Activated CD4-positive, alpha-beta T cell treated with anti-CD3 and anti-CD28 coated beads, Interleukin-2, amount 10 ng/mL, durations not matched to agents 24 days and 14 days (primary cell): ENCODE measurements at regions of chr1 and their contacts with region 1.

Region 1: GRCh38 chr1:65812065-65812464 is 19.4 kb downstream of the PDE4B start:
- DNase-seq: peak; percentile 91
- H3K4me3 Mint-ChIP-seq: peak overlapping the region; percentile 4
- H3K27ac Mint-ChIP-seq: peak overlapping the region; percentile 76
- H3K4me1 Mint-ChIP-seq: peaks cover 21% of the 10 kb centered on the region
- H3K27me3 Mint-ChIP-seq: peaks cover 15% of the 10 kb centered on the region

Region 2: GRCh38 chr1:64877151-64877550 is 934.9 kb before region 1 on chr1:
- intact Hi-C with region 1: loop called (anchors 5 kb)
- DNase-seq: peak; percentile 85
- H3K4me3 Mint-ChIP-seq: peak overlapping the region; percentile 62
- H3K27ac Mint-ChIP-seq: peak overlapping the region; percentile 45
- H3K4me1 Mint-ChIP-seq: peaks cover 56% of the 10 kb centered on the region
- H3K27me3 Mint-ChIP-seq: no peaks in the 10 kb centered on the region

Region 3: DNA sequence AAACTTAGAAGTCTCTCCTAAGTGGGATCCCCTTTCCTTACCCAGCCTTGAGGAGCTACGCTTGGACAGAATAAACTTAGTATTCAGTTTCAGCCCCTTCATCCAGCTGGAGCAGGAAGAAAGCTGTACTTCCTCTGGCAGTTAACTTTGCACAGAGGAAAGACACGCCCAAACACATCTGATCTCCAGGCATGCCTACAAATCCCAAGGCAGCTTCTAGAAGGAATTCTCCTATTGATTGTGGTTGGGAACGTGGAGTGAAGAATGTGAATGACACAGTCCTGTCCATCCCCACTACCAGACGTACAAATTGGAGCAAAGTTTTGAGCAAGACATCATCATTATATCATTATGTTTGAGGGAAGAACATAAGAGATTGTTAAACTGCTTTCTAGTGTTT is 670.7 kb before region 1 on chr1:
- intact Hi-C with region 1: no loop called
- DNase-seq: no peak
- H3K4me3 Mint-ChIP-seq: no peak overlapping the region
- H3K27ac Mint-ChIP-seq: no peak overlapping the region
- H3K4me1 Mint-ChIP-seq: peaks cover 8% of the 10 kb centered on the region
- H3K27me3 Mint-ChIP-seq: peaks cover 29% of the 10 kb centered on the region

Region 4: DNA sequence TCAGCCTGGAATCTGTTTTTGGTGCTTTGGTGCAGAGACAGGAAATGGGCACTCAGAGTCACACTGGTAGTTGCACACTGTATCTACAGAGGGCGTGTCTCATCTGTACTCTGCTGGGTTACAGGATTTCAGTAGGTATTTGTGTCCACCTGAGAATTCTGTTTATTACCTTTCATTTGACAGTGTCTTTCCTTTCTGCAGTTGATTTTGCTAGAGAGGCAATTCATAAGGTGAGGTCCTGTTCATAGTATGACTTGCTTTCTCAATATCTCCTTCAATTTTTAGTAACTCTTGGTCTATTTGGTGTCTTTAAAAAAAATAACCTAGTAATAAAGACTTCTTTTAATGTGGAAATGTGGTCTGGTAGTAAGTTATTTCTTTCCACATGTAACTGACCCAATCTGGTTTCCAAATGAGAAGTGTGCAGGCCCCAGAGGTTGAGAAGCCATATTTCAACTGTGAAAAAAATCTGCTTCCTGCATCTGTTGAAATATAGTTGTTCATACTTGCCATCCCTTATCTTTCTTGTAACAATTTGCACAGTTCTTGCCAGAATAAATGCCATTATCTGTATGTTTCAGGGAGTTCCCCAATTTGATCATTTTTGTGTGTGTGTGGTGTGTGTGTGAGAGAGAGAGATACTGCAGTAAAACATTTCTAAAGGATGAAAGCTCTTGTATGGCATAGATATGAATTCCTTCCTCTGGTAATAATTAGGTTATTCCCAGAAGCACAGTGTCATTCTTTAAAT is 581.2 kb before region 1 on chr1:
- intact Hi-C with region 1: loop called (anchors 1 kb)
- DNase-seq: no peak
- H3K4me3 Mint-ChIP-seq: peak overlapping the region; percentile 71
- H3K27ac Mint-ChIP-seq: peak overlapping the region; percentile 93
- H3K4me1 Mint-ChIP-seq: peaks cover 28% of the 10 kb centered on the region
- H3K27me3 Mint-ChIP-seq: no peaks in the 10 kb centered on the region

Region 5: DNA sequence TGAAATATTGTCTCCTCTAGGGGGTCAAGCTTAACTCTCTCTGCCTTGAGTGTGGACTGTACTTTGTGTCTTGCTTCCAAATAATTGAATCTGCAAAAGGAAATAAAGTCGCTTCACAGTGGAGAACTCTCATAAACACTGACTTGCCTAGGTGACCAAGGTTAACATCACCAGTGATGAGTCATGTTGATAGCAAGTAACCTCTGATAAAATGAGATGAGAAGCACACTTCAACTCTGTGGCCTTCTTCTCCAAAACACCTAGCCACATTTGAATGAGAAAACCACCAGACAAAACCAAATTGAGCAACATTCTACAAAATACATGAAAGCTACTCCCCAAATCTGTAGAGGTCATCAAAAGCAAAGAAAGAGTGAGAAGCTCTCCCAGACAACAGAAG is 18.2 kb after region 1 on chr1:
- intact Hi-C with region 1: loop called (anchors 1 kb)
- DNase-seq: peak; percentile 70
- H3K4me3 Mint-ChIP-seq: no peak overlapping the region
- H3K27ac Mint-ChIP-seq: peak overlapping the region; percentile 5
- H3K4me1 Mint-ChIP-seq: peaks cover 12% of the 10 kb centered on the region
- H3K27me3 Mint-ChIP-seq: peaks cover 38% of the 10 kb centered on the region

Region 6: GRCh38 chr1:66242646-66243547 is 430.8 kb after region 1 on chr1:
- intact Hi-C with region 1: loop called (anchors 2 kb)
- DNase-seq: peak; percentile 93
- H3K4me3 Mint-ChIP-seq: no peak overlapping the region
- H3K27ac Mint-ChIP-seq: no peak overlapping the region
- H3K4me1 Mint-ChIP-seq: peaks cover 25% of the 10 kb centered on the region
- H3K27me3 Mint-ChIP-seq: peaks cover 6% of the 10 kb centered on the region

Region 7: GRCh38 chr1:66436378-66437145 is 624.5 kb after region 1 on chr1:
- intact Hi-C with region 1: loop called (anchors 5 kb)
- DNase-seq: peak; percentile 80
- H3K4me3 Mint-ChIP-seq: no peak overlapping the region
- H3K27ac Mint-ChIP-seq: peak overlapping the region; percentile 7
- H3K4me1 Mint-ChIP-seq: peaks cover 33% of the 10 kb centered on the region
- H3K27me3 Mint-ChIP-seq: no peaks in the 10 kb centered on the region